OCI-LY7 (cell line): ENCODE measurements at regions of chr2 and their contacts with region 1.

Region 1: GRCh38 chr2:48946449-48947048 is 191.0 kb upstream of the LHCGR start:
- DNase-seq: peak; percentile 63
- H3K4me3 ChIP-seq: no peak overlapping the region
- H3K27ac ChIP-seq: no peak overlapping the region
- H3K4me1 ChIP-seq: no peaks in the 10 kb centered on the region
- CTCF ChIP-seq: peak; percentile 96

Region 2: GRCh38 chr2:48934807-48935206 is 11.7 kb before region 1 on chr2:
- CTCF ChIA-PET with region 1: no interaction called
- POLR2A ChIA-PET with region 1: no interaction called
- intact Hi-C with region 1: no loop called
- DNase-seq: no peak
- H3K4me3 ChIP-seq: no peak overlapping the region
- H3K27ac ChIP-seq: no peak overlapping the region
- H3K4me1 ChIP-seq: no peaks in the 10 kb centered on the region
- CTCF ChIP-seq: no peak

Region 3: DNA sequence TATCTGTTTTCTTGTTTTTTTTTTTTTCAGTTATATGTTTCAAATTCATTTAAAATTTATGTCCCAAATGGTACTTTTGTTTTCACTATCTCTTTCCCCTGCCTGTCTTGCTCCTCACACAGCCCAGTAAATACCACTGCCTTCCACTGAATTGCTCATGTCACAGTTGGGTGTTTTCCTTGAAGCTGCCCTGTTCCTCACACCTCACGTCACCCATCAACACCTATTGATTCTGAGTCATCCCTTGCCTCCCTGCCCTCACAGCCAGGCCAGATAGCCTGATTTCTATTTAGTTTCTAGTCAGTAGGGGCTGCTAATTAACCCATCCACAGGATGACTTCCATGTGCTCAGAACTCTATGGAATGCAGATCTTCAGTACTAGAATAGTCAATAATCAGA is 182.5 kb after region 1 on chr2:
- CTCF ChIA-PET with region 1: no interaction called
- POLR2A ChIA-PET with region 1: no interaction called
- intact Hi-C with region 1: no loop called
- DNase-seq: no peak
- H3K4me3 ChIP-seq: no peak overlapping the region
- H3K27ac ChIP-seq: no peak overlapping the region
- H3K4me1 ChIP-seq: no peaks in the 10 kb centered on the region
- CTCF ChIP-seq: no peak

Region 4: DNA sequence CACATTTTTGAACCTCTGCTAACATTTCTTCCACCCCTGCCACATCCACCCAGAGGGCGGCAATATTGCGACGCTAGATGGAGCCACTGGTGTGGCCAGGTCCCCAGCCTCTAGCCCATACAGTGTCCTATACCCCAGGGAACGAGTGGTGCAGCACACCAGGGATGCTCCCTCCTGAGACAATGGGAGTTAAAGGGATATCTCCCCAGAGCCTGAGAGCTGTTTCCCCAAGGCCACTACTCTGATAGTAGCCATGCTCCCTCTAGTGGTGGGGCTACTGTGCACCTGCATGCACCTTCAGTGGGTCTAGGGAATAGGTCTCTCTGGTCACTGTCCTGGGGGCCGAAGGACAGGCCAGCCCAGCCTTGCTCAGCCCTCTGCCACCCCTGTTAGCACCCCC is 544.2 kb after region 1 on chr2:
- CTCF ChIA-PET with region 1: no interaction called
- POLR2A ChIA-PET with region 1: no interaction called
- intact Hi-C with region 1: loop called (anchors 5 kb)
- DNase-seq: peak; percentile 29
- H3K4me3 ChIP-seq: no peak overlapping the region
- H3K27ac ChIP-seq: no peak overlapping the region
- H3K4me1 ChIP-seq: no peaks in the 10 kb centered on the region
- CTCF ChIP-seq: peak; percentile 70

Region 5: DNA sequence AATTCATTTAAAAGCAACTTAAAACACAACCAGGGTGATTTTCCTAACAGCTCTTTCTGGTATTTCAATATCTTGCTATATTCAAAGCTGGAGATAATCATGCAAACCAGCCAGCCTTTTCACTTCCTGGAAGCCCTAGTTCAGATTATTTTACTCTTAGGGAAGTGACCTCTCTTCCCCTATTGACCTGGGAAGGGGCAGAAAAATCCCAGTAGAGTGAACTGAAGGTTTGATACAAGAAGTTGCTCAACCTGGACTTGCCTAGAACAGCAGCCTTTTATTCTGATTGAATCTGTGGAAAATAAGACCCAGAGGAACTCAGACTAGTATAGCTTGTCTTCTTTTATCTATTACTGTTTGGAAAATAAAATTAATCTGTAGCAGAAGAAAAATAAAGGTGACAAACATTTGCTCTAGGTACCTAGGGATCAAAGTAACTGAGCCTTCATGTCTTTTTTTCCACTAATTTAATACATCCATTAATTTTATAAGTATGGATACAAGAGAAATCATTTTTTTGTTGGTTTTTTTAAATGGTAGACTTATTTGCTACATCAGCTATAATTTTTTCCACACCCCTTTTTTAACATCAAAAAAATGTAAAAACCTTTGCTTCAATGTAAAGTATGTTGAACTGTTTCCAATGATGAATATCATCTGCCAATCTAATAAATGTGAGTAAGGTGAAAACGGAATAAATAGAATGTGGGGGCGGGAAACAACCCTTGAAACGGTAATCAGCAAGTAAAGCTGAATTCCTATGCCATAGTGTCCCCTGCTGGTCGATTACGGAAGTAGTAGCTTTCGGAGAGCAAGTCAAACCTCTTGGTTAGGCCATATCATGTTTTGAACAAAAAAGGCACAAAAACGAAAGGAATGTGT is 1455.5 kb after region 1 on chr2:
- CTCF ChIA-PET with region 1: no interaction called
- POLR2A ChIA-PET with region 1: no interaction called
- intact Hi-C with region 1: loop called (anchors 5 kb)
- DNase-seq: peak; percentile 37
- H3K4me3 ChIP-seq: no peak overlapping the region
- H3K27ac ChIP-seq: no peak overlapping the region
- H3K4me1 ChIP-seq: no peaks in the 10 kb centered on the region
- CTCF ChIP-seq: peak; percentile 91